H1 (cell line): ENCODE measurements at regions of chr9 and their contacts with region 1.

Region 1: GRCh38 chr9:135565141-135565628 is 3.6 kb downstream of the PAEP start:
- DNase-seq: no peak
- H3K4me3 ChIP-seq: no peak overlapping the region
- H3K27ac ChIP-seq: no peak overlapping the region
- H3K4me1 ChIP-seq: no peaks in the 10 kb centered on the region; a peak in 1 of 7 replicates
- H3K27me3 ChIP-seq: no peaks in the 10 kb centered on the region
- CTCF ChIP-seq: no peak
- EP300 ChIP-seq: no peak
- POLR2A ChIP-seq: no peak
- RAD21 ChIP-seq: no peak

Region 2: DNA sequence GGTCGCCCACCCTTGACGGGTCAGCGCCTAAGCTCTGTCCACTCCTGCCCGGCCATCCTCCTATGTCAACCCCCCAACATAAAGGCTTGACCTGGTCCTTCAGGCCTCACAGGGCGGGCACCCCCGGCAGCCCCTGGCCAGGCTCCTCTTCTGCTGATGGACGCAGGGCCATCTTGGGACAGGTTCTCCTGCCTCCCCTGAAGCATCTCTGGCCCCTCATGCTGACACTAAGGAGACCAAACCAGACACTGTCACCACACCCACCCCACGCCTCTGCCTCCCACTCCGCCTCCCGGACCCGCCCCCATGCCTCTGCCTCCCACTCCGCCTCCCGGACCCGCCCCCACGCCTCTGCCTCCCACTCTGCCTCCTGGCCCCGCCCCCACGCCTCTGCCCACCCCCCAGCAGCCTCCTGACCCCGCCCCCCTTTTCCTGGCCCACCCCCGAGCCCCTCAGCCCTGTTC is 12.5 kb before region 1 on chr9:
- CTCF ChIA-PET with region 1: interaction called, 10 read pairs
- POLR2A ChIA-PET with region 1: no interaction called
- DNase-seq: no peak
- H3K4me3 ChIP-seq: no peak overlapping the region
- H3K27ac ChIP-seq: no peak overlapping the region
- H3K4me1 ChIP-seq: peaks cover 0 to 3% (median 0%) of the 10 kb centered on the region in 4 experiments; a peak in 2 of 7 replicates
- H3K27me3 ChIP-seq: no peaks in the 10 kb centered on the region; a peak in 1 of 7 replicates
- CTCF ChIP-seq: no peak
- EP300 ChIP-seq: no peak
- POLR2A ChIP-seq: no peak
- RAD21 ChIP-seq: no peak

Region 3: GRCh38 chr9:135582966-135583687 is 17.9 kb after region 1 on chr9:
- CTCF ChIA-PET with region 1: no interaction called
- POLR2A ChIA-PET with region 1: no interaction called
- DNase-seq: peak in 1 of 2 experiments; percentile 30
- H3K4me3 ChIP-seq: no peak overlapping the region
- H3K27ac ChIP-seq: no peak overlapping the region
- H3K4me1 ChIP-seq: no peaks in the 10 kb centered on the region; a peak in 1 of 7 replicates
- H3K27me3 ChIP-seq: no peaks in the 10 kb centered on the region
- CTCF ChIP-seq: no peak
- EP300 ChIP-seq: no peak
- POLR2A ChIP-seq: no peak
- RAD21 ChIP-seq: no peak

Region 4: GRCh38 chr9:135662758-135663450 is 97.7 kb after region 1 on chr9 and contains the start of gene LCN9:
- CTCF ChIA-PET with region 1: no interaction called
- POLR2A ChIA-PET with region 1: no interaction called
- DNase-seq: peak in 1 of 2 experiments; percentile 43
- H3K4me3 ChIP-seq: no peak within 1 kb of the TSS
- H3K27ac ChIP-seq: no peak within 1 kb of the TSS
- H3K4me1 ChIP-seq: peaks cover 0 to 8% (median 4%) of the 10 kb centered on the region in 4 experiments; a peak in 3 of 7 replicates
- H3K27me3 ChIP-seq: no peaks in the 10 kb centered on the region; a peak in 1 of 7 replicates
- CTCF ChIP-seq: no peak
- EP300 ChIP-seq: no peak
- POLR2A ChIP-seq: no peak
- RAD21 ChIP-seq: no peak
- total RNA-seq, gene LCN9: 3.1 and 3.7 TPM in 2 replicates